AG04450 (cell line): ENCODE measurements at regions of chr6 and their contacts with region 1.

Region 1: DNA sequence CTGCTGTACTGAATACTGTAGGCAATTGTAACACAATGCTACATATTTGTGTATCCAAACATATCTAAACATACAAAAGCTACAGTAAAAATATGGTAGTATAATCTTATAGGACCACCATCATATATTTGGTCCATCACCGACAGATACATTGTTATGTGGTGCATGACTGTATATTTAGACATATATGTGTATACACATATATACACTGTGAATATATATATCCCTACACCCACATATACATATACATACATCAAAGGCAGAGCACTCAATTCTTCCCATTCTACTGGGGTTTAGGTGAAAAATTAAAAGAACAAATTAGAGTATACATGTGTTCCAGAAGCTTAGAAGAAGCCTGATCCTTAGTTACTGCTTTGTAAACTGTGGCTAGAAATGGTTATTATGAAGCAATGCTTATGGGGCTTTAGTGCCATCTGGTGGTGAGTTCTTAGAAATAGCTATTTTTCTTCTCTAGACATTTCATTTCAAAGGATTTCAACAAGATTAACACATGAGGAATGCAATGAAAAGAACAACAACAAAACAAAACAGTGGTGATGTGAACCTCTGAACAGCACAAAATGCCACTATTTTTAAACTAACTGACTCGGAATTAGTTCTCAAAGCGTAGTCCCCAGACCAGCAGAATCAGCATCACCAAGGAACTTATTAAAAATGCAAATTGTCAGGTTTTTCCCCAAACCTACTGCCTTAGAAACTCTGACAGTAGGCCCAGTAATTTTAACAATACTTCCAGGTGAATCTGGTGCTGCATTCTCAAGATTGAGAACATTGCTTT is 38.0 kb downstream of the PKHD1 start:
- DNase-seq: no peak
- H3K4me3 ChIP-seq: no peak overlapping the region
- H3K27ac ChIP-seq: no peak overlapping the region
- H3K27me3 ChIP-seq: no peaks in the 10 kb centered on the region
- CTCF ChIP-seq: peak; percentile 75

Region 2: GRCh38 chr6:51704932-51705540 is 344.4 kb before region 1 on chr6:
- CTCF ChIA-PET with region 1: no interaction called
- POLR2A ChIA-PET with region 1: no interaction called
- DNase-seq: no peak
- H3K4me3 ChIP-seq: no peak overlapping the region
- H3K27ac ChIP-seq: no peak overlapping the region
- H3K27me3 ChIP-seq: no peaks in the 10 kb centered on the region
- CTCF ChIP-seq: no peak

Region 3: DNA sequence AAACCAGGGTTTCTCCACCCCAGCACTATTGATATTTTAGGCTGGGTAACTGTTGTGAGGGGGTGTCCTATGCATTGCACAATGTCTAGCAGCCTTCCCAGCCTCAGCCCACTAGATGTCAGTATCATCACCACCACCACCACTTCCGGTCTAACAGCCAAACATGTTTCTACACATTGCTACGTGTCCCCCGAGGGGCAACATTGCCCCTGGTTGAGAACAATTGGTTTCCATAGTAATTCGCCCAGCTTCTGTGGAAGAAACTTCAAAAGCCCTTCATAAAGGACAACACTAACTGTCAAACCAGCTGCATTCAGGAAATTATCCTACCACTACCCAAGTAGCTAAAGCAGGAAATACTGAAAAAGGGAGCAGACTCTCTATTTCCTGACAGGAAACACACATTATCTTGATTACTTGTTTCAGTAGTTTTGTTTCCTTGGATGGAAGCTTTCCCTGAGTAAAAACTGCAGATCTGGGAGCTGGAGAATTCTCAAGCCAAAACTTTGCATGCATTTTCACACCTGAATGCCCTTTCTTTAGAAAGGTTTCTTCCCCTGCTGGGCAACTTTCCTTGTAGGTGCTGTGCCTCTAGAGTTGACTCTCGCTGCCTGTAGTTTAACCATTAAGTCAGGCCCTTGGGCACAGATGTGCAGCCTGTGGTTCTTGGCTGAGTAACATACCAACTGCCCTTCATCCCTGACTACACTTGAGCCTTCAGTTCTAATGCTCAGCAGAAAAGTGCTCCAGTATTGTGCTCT is 14.3 kb after region 1 on chr6:
- CTCF ChIA-PET with region 1: interaction called, 50 read pairs
- POLR2A ChIA-PET with region 1: no interaction called
- DNase-seq: no peak
- H3K4me3 ChIP-seq: no peak overlapping the region
- H3K27ac ChIP-seq: no peak overlapping the region
- H3K27me3 ChIP-seq: no peaks in the 10 kb centered on the region
- CTCF ChIP-seq: peak; percentile 55